ENCODE measurements at regions of chr15 and their contacts with region 1.

Region 1: DNA sequence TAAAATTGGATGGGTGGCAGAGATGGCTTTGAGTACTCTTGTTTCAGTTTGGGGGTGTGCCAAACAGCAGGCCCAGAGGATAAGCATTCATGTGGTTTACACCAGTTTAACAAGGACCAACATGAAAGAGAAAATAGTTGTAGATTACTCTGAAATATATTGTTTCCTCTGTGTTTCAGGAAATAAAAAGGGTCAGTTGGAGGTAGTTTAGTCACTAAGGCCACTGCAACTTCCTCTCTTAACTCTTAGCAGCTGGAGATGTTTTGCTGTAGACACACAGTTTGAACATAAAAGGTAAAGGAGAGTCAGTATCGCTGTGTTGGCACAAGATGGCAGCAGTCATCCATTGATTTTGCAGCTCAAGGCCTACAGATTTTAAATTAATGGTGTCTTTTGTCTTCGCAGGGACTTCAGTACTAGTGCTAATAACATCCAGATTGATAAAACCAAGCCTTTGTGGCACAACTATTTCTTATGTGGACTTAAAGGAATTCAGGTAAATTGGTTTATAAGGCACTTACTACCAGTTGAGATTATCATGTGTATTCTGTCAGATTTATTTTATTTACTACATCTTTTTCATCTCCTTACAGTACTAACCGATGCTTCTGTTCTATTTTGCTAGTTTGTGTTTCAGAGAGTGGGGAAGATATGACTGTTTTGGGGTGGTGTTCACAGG is 65.5 kb downstream of the GALK2 start:
- DNase-seq: peak; percentile 19
- H3K4me3 ChIP-seq: no peak overlapping the region
- H3K27ac ChIP-seq: no peak overlapping the region
- H3K4me1 ChIP-seq: peaks cover 6% of the 10 kb centered on the region
- H3K27me3 ChIP-seq: no peaks in the 10 kb centered on the region
- CTCF ChIP-seq: peak in 3 of 4 experiments; percentile 48 to 75 (median 52)
- POLR2A ChIP-seq: no peak

Region 2: DNA sequence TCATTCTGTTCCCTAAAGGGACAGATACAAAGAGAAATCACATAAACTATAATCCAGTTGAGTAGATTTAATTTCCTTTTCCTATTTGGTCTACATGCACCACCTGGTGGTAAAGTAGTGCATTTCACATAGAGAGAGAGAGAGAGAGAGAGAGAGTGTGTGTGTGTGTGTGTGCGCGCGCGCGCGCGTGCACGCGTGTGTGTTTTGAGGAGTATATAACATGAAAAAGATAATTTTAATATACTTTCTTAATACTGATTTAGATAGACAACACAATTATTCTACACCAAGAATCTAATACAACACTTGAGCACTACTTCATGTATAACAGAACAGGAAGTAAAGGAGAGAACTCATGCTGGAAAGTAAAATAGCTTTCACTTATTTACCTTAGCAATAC is 186.4 kb after region 1 on chr15:
- intact Hi-C with region 1: loop called (anchors 2 kb)
- DNase-seq: no peak
- H3K4me3 ChIP-seq: no peak overlapping the region
- H3K27ac ChIP-seq: no peak overlapping the region
- H3K4me1 ChIP-seq: no peaks in the 10 kb centered on the region
- H3K27me3 ChIP-seq: no peaks in the 10 kb centered on the region
- CTCF ChIP-seq: peak; percentile 44 to 89 (median 61)
- POLR2A ChIP-seq: no peak

Region 3: DNA sequence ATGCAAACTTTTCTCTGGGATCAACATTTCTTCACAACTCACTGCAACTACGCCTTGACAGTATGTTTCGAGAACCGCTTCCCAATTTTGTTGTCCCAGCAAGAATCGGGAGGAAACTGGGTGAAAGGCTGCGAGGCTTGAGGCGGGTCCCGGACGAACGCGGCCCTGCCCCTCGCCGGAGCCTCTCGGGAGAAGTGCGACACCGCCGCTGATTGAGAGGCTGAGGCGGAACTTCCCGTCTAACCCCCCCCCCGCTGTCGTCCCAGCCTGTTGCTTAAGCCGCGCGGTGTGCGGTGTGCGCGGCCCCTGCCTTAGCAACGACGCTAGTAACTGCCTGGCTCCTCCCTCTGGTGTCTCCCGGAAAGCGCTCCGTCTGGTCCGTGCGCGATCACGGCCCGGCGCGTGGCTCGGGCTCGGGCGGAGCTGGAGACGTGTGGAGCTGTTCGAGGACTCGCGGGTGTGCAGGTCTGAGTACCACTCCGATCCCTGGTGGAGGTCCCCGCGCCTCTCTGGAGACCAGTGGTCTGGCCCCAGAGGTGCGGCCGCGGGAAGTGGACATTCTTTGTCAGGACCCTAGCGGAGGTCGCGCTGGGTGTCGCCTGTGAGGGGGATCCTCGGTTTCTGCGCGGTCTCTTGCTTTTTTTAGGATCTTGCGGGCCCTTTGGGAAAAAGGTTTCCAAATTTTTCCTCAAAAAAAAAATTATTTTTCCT is 385.2 kb after region 1 on chr15 and contains the starts of genes DTWD1 and FAM227B:
- intact Hi-C with region 1: loop called (anchors 10 kb)
- DNase-seq: peak; percentile 95
- H3K4me3 ChIP-seq: peak within 1 kb of the TSS; percentile 62 to 63
- H3K27ac ChIP-seq: peak within 1 kb of the TSS; percentile 86 to 87
- H3K4me1 ChIP-seq: no peaks in the 10 kb centered on the region
- H3K27me3 ChIP-seq: no peaks in the 10 kb centered on the region
- CTCF ChIP-seq: peak in 2 of 4 experiments; percentile 11 to 17
- POLR2A ChIP-seq: peak; percentile 72
- total RNA-seq, gene DTWD1: 16.6 to 21.1 TPM
- total RNA-seq, gene FAM227B: 8.3 to 12.9 TPM

Region 4: GRCh38 chr15:49901996-49902684 is 666.6 kb after region 1 on chr15:
- intact Hi-C with region 1: loop called (anchors 5 kb)
- DNase-seq: no peak
- H3K4me3 ChIP-seq: no peak overlapping the region
- H3K27ac ChIP-seq: peak overlapping the region; percentile 26 to 28
- H3K4me1 ChIP-seq: no peaks in the 10 kb centered on the region
- H3K27me3 ChIP-seq: peaks cover 2% of the 10 kb centered on the region
- CTCF ChIP-seq: peak in 1 of 4 experiments; percentile 21
- POLR2A ChIP-seq: no peak

Region 5: GRCh38 chr15:50003786-50004334 is 768.3 kb after region 1 on chr15:
- intact Hi-C with region 1: loop called (anchors 10 kb)
- DNase-seq: peak; percentile 52
- H3K4me3 ChIP-seq: no peak overlapping the region
- H3K27ac ChIP-seq: peak overlapping the region; percentile 2 to 19
- H3K4me1 ChIP-seq: no peaks in the 10 kb centered on the region
- H3K27me3 ChIP-seq: no peaks in the 10 kb centered on the region
- CTCF ChIP-seq: peak in 3 of 4 experiments; percentile 46 to 56 (median 55)
- POLR2A ChIP-seq: no peak

Region 6: GRCh38 chr15:50051803-50052419 is 816.3 kb after region 1 on chr15:
- intact Hi-C with region 1: loop called (anchors 2 kb)
- DNase-seq: peak; percentile 32
- H3K4me3 ChIP-seq: no peak overlapping the region
- H3K27ac ChIP-seq: no peak overlapping the region
- H3K4me1 ChIP-seq: no peaks in the 10 kb centered on the region
- H3K27me3 ChIP-seq: no peaks in the 10 kb centered on the region
- CTCF ChIP-seq: peak; percentile 36 to 71 (median 52)
- POLR2A ChIP-seq: no peak

Region 7: DNA sequence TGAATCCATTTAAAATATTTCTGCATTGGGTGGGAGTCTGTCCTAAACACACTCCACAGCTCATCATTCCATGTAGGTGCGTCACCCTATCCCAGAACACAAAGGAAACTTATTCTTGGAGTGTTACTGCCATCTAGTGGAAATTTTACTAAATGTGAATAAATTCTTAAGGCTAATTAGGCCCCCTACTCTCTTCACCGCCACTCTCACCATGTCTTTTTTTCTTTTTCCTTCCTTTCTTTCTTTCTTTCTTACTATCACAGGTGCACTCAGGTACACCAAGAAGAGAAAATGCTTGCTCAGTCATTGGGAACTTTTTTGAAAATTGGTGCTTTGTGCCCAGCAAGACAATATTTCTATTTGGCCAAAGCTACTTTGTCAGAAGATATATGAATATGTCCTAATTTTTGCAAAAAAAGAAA is 909.9 kb after region 1 on chr15:
- intact Hi-C with region 1: loop called (anchors 5 kb)
- DNase-seq: peak; percentile 19
- H3K4me3 ChIP-seq: no peak overlapping the region
- H3K27ac ChIP-seq: no peak overlapping the region
- H3K4me1 ChIP-seq: no peaks in the 10 kb centered on the region
- H3K27me3 ChIP-seq: no peaks in the 10 kb centered on the region
- CTCF ChIP-seq: peak in 3 of 4 experiments; percentile 61 to 70 (median 70)
- POLR2A ChIP-seq: no peak